Lower leg skin (tissue), 4 donors: ENCODE measurements at regions of chr22 and their contacts with region 1.

Region 1: DNA sequence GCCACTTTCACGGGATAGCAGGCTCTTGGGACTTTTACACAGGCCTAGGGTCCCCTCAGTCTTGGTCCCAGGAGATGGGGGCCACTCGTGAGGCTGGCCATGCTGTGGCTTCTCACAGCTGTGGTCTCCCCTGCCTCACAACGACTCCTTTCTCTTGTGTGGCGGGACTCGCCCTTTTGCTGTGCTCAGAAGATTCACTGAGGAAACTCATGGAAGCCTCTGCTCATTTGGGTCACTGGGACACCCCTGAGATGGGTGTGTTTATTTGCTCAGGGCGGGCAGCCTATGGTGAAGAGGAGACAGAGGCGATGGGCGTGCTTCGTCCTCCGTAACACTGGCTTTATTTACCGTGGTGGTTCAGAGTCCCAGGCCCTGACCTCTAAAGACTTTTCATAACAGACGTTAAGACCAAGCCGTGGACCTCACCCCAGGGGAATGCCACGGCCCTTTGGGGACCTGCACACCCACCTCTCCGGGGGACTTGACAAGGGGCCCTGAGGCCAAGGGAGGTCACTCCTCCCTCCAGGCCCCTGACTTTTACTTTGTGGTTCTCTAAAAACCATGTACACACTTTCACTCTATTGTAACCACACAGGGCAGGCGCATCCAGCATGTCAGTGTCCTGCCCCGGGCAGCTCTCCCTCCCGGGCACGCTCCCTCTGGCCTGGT is 15.5 kb downstream of the TEF start:
- DNase-seq: no peak
- H3K4me3 ChIP-seq: no peak overlapping the region
- CTCF ChIP-seq: no peak
- POLR2A ChIP-seq: no peak

Region 2: DNA sequence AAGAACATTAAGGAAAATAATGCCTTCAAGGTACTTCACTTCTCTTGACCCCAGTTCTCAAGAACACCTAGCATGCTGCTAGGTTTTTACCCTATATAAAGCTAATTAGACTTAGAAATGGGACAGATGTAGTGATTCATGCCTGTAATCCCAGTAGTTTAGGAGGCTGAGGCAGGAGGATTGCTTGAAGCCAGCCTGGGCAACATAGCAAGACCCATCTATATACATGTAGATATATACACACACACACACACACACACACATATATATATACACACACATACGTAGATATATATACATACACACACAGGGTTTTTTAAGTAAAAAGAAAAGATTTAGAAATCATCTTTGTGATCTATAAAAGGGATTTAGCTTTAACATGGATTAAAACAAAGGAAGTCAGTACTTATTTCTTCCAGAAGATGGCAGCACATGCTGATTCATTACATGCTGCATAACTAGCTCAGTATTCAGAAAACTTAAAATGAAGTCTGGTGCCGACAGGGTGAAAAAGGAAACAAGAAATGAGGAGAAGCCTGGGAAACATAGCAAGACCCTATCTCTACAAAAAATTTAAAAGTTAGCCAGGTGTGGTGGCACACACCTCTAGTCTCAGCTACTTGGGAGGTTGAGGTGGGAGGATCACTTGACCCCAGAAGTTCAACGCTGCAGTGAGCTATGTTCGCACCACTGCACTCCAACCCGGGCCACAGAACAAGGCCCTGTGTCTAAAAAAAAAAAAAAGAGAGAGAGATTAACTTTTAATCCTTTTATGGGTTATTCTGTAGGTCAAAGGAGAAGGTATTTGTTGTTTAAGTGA is 474.6 kb before region 1 on chr22:
- intact Hi-C with region 1: no loop called
- DNase-seq: peak in 1 of 2 donors; percentile 16
- H3K4me3 ChIP-seq: no peak overlapping the region
- CTCF ChIP-seq: no peak
- POLR2A ChIP-seq: no peak

Region 3: DNA sequence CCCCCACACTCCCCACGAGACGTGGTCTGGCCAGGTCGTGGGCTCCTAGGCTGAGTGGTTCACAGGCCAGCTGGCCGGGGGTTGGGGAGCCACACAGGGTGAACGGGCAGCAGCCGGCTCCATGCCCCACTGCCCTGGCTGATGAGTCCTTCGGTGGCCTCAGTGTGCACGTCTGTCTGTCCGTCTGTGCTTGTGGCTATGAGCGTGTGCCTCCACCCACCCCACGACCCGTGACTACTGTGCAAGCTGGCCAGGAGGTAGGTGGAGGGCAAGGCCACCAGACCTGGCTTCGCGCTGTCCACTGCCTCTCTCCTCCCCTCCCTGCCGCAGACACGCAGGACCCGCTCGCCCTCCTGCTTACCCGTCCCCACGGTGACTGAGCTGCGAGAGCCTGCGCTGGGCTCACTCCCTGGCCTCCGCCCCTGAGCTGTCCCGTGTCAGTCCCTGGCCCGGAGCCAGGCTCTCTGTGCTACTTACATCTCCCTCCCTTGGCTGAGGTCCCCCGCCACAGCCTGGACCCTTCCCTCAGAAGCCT is 177.6 kb after region 1 on chr22:
- intact Hi-C with region 1: no loop called
- DNase-seq: peak; percentile 45 to 91
- H3K4me3 ChIP-seq: no peak overlapping the region
- CTCF ChIP-seq: no peak
- POLR2A ChIP-seq: no peak

Region 4: GRCh38 chr22:41589391-41590241 is 192.3 kb after region 1 on chr22 and contains the start of gene PMM1:
- intact Hi-C with region 1: loop called (anchors 10 kb)
- DNase-seq: peak; percentile 100
- H3K4me3 ChIP-seq: peak within 1 kb of the TSS; percentile 68
- CTCF ChIP-seq: no peak
- POLR2A ChIP-seq: no peak
- total RNA-seq, gene PMM1: 44.0 to 60.4 (median 50.1) TPM